ENCODE measurements at regions of chr9 and their contacts with region 1.

Region 1: GRCh38 chr9:69971643-69972449 is 71.8 kb upstream of the MAMDC2 start:
- DNase-seq: peak; percentile 73 to 81 (median 76)
- ATAC-seq: peak; percentile 62
- H3K4me3 ChIP-seq: no peak overlapping the region
- H3K27ac ChIP-seq: no peak overlapping the region
- H3K4me1 ChIP-seq: no peaks in the 10 kb centered on the region
- H3K27me3 ChIP-seq: no peaks in the 10 kb centered on the region
- CTCF ChIP-seq: peak; percentile 78 to 90 (median 84)
- POLR2A ChIP-seq: no peak

Region 2: GRCh38 chr9:69809304-69809863 is 162.5 kb before region 1 on chr9:
- intact Hi-C with region 1: no loop called
- DNase-seq: no peak
- ATAC-seq: no peak
- H3K4me3 ChIP-seq: no peak overlapping the region
- H3K27ac ChIP-seq: no peak overlapping the region
- H3K4me1 ChIP-seq: no peaks in the 10 kb centered on the region
- H3K27me3 ChIP-seq: no peaks in the 10 kb centered on the region
- CTCF ChIP-seq: no peak
- POLR2A ChIP-seq: no peak

Region 3: DNA sequence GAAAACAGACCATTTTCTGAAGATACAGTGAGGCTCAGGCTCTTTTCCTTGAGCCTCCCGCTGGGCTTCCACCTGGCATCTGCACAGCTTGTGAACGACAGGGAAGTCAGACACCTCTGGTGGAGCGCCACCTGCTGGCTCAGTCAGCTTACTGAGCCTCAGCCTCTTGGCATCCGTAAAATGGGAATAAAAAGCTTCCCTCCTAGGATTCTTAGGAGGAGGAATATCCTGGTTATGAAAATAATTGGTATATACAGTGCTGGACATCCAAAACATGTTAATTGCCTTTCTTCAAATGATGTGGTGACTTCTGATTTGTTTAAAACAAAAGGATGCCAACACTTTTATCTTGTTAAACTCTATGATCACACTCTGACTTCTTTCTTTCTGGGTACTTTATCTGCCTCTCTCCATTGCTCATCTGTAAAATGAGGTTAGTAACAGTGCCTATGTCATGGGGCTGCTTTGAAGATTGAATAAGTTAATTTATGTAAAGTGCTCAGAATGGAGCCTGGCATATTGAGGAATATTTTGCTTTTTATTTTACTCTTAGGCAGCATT is 139.3 kb after region 1 on chr9:
- intact Hi-C with region 1: loop called (anchors 5 kb)
- DNase-seq: peak; percentile 86 to 92 (median 87)
- ATAC-seq: peak; percentile 87
- H3K4me3 ChIP-seq: no peak overlapping the region
- H3K27ac ChIP-seq: no peak overlapping the region
- H3K4me1 ChIP-seq: no peaks in the 10 kb centered on the region
- H3K27me3 ChIP-seq: no peaks in the 10 kb centered on the region
- CTCF ChIP-seq: peak; percentile 77 to 91 (median 87)
- POLR2A ChIP-seq: no peak

Region 4: DNA sequence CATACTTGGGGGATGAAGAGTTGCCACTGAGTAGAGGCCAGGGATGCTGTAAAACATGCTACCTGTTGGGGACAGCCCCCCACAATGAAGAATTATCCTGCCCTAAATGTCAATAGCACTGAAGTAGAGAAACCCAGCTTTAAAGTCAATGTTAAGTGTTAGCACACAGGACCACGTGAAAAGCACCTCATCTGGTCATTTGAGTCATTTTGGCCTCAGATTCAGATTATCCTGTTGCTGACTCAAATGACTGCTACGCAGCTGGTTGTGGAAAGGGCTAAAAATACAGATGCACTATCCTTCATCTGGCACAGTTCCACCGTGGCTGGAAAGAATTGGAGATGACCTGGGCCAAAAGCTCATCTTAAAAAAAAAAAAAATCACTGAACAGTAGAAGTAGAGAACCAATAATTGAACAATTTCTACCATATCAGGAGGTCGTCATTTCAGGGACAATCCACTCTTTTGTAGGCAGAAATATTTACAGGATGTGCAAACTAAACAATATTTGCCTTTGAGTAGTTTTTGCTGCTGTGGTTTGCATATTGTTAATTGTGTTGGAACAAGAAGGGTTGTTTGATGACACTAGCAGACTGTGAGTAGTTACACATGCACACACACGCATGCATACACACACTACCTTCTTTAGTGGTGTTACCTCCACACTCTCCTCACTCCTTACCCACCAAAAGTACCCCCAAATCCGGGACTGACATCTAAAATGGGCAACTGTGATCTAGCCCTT is 637.9 kb after region 1 on chr9:
- intact Hi-C with region 1: loop called (anchors 10 kb)
- DNase-seq: peak in 3 of 4 donors; percentile 28 to 43 (median 41)
- ATAC-seq: no peak
- H3K4me3 ChIP-seq: no peak overlapping the region
- H3K27ac ChIP-seq: no peak overlapping the region
- H3K4me1 ChIP-seq: no peaks in the 10 kb centered on the region
- H3K27me3 ChIP-seq: no peaks in the 10 kb centered on the region
- CTCF ChIP-seq: no peak
- POLR2A ChIP-seq: no peak